ENCODE measurements at regions of chr22 and their contacts with region 1.

Region 1: DNA sequence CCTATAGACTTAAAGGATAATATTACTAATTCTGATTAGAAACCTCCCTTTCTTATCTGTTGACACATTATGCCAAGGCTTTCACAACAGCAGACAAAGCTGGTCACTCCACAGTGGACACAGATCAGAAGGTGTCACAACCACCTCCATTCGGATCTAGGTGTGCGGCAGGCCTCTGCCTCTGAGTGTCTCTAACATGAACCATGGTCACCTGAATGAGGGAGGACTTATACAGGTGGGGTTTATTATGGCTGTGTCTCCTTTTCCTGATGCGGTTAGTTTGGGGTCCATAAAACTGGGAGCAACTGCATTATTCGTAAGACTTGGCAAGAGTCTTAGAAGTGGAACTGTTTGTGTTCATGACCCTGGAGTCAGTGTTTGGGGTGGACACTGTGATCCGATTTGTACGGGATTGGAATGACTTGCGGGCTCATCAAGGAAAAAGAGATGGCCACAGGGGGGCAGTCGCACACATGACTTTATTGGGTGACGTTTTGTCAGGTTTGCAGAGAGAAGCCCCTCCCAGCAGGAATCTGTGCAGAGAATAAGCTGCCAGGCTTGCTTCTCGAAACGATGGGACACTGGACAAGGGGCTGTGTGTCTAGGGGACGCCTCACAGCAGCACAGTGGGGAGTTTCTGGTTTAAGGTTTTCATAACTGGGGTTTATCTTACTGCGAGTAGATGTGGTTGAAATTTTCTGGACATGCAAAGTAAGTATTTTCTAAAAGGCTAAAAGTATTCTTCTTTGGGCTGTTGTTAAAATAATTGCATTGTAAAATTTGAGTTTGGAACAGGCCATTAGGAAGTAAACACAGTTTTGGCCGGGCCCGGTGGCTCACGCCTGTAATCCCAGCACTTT is 90.6 kb downstream of the GAB4 start:
- DNase-seq: peak; percentile 85
- H3K4me3 ChIP-seq: no peak overlapping the region
- H3K27ac ChIP-seq: no peak overlapping the region
- H3K4me1 ChIP-seq: peaks cover 89% of the 10 kb centered on the region
- CTCF ChIP-seq: peak; percentile 94

Region 2: DNA sequence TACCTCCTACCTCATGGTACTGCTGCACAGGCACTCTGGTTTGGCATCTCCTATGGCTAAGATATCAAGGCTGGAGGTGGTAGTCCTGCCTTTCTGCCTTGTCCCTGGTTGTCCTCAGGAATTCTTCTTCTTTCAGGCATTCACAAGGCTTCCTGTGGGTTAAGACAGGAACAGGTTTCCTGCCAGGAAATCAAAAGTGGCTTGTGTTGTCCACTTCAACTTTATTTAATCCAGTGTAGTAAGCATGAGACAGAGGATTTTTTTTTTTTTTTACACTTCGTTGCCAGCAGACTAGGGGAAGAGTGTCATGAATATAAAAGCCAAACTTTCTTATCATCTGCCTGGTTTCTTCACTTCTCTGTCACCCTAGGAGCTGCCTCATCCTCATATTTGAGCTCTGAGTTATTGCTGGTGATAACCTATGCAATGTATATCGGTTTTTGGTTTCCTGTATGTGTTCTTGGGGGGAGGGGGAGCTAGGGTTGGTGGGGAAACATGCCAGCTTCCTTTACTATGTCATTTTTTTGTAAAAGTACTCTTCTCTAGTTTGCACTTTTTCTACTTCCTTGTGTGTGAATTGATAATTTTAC is 142.4 kb before region 1 on chr22:
- CTCF ChIA-PET with region 1: no interaction called
- POLR2A ChIA-PET with region 1: interaction called, 5 read pairs
- intact Hi-C with region 1: loop called (anchors 2 kb)
- DNase-seq: no peak
- H3K4me3 ChIP-seq: no peak overlapping the region
- H3K27ac ChIP-seq: no peak overlapping the region
- H3K4me1 ChIP-seq: peaks cover 3% of the 10 kb centered on the region
- CTCF ChIP-seq: peak; percentile 29; the same call in 1 of the 2 replicates

Region 3: GRCh38 chr22:16955678-16956210 is 38.4 kb after region 1 on chr22:
- CTCF ChIA-PET with region 1: no interaction called
- POLR2A ChIA-PET with region 1: no interaction called
- intact Hi-C with region 1: no loop called
- DNase-seq: no peak
- H3K4me3 ChIP-seq: no peak overlapping the region
- H3K27ac ChIP-seq: no peak overlapping the region
- H3K4me1 ChIP-seq: peaks cover 6% of the 10 kb centered on the region
- CTCF ChIP-seq: no peak

Region 4: DNA sequence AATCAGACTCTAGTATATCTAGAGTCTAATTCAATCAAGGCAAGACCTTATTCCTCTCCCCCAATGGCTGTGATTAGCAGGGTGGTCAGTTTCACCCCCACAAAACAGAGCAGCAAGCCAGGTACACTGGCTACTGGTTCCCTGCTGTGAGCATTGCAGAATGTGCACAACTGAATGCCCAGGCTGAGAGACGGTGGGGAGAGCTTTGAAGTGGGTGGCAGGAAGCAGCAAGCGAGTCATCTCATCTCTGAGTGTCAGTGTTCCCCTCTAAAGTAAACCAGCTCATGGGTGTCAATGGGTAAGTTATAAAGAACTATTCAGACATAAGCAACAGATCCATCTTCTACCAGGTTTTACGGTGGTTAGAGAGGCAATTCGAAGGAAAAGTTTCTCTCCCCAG is 53.1 kb after region 1 on chr22:
- CTCF ChIA-PET with region 1: no interaction called
- POLR2A ChIA-PET with region 1: no interaction called
- intact Hi-C with region 1: loop called (anchors 10 kb)
- DNase-seq: peak; percentile 42
- H3K4me3 ChIP-seq: no peak overlapping the region
- H3K27ac ChIP-seq: no peak overlapping the region
- H3K4me1 ChIP-seq: peaks cover 35% of the 10 kb centered on the region
- CTCF ChIP-seq: no peak

Region 5: DNA sequence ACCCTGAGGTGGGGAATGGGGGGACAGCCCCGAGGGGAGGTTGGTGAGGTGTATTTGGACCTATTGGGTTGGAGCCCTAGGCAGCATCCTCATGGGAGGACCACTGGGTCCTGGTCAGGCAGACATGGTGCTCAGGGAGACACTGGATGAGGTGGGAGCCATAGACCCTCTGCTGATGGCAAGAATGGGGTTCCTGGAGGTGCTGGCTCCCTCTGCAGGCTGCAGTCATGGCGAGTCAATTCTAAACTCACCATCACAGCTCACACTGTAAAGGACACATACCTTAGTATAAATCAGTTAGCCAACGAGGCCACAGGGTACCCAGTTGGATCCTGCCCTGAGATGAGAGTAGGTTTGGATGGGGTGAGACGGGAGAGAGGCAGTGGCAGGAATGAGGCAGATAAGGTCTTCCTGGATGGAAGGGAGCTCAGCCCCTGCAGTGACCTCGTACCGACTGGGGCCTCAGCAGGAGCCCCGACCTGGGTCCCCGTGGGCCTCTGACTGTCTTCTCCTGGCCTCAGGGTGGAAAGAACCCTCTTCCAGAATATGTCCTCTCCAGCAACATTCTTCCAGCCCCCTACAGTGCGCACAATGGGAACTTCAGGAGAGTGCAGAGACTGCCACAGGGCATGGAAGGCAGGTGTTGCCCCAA is 92.4 kb after region 1 on chr22:
- CTCF ChIA-PET with region 1: no interaction called
- POLR2A ChIA-PET with region 1: no interaction called
- intact Hi-C with region 1: loop called (anchors 1 kb)
- DNase-seq: peak; percentile 34
- H3K4me3 ChIP-seq: no peak overlapping the region
- H3K27ac ChIP-seq: no peak overlapping the region
- H3K4me1 ChIP-seq: no peaks in the 10 kb centered on the region
- CTCF ChIP-seq: peak; percentile 76

Region 6: GRCh38 chr22:17057959-17058814 is 140.8 kb after region 1 on chr22:
- CTCF ChIA-PET with region 1: interaction called, 10 read pairs
- POLR2A ChIA-PET with region 1: interaction called, 8 read pairs
- intact Hi-C with region 1: loop called (anchors 1 kb)
- DNase-seq: peak; percentile 58
- H3K4me3 ChIP-seq: no peak overlapping the region
- H3K27ac ChIP-seq: no peak overlapping the region
- H3K4me1 ChIP-seq: peaks cover 2% of the 10 kb centered on the region
- CTCF ChIP-seq: peak; percentile 97

Region 7: DNA sequence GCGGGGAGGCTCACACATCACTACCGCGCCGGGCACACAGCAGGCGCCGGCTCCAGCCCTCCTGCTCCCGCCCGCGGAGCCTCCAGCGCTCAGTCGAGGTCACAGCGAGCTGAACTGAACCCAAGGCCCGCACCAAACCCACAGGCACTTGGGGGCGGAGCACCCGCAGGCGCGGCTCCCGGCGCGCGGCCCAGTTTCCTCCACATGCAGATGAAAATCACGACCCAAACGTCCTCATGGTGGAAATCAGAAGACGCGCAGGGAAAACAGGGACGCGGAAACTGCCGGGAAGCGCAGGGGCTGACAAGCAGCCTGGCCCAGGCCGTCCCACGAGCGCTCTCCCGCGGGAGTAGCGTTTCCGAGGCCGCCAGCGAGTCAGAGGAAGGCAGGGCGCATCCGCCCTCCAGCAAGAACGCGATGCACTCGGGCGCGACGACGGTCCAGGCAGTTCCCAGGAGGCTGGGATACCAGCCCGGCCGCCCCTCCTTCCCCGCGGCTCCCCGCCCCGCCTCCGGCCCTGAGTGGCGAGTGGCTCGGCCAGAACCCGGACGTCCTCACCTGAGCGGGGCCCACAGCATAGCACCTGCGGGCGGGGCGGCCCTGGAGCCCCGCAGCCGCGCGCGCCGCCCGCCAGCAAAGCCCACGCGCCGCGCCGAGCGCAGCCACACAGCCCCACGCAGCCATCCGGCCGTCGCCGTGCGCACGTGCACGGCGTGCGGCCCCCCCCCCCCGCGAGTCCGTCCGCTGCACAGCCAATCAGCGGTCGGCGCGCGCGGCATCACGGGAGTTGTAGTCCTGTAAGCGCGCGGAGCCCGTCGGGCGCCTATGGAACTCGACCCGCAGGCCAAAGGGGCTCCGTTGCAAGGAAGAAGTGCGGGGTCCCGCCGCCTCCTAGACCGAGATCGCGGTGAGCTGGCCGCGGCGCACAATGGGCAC is 241.5 kb after region 1 on chr22 and contains the start of gene HDHD5:
- CTCF ChIA-PET with region 1: no interaction called
- POLR2A ChIA-PET with region 1: no interaction called
- intact Hi-C with region 1: loop called (anchors 5 kb)
- DNase-seq: peak; percentile 91
- H3K4me3 ChIP-seq: peak within 1 kb of the TSS; percentile 83
- H3K27ac ChIP-seq: peak within 1 kb of the TSS; percentile 47
- H3K4me1 ChIP-seq: peaks cover 26% of the 10 kb centered on the region
- CTCF ChIP-seq: no peak
- total RNA-seq, gene HDHD5: 77.3 and 84.6 TPM in 2 replicates